A549 (cell line): ENCODE measurements at regions of chr19 and their contacts with region 1.

Region 1: DNA sequence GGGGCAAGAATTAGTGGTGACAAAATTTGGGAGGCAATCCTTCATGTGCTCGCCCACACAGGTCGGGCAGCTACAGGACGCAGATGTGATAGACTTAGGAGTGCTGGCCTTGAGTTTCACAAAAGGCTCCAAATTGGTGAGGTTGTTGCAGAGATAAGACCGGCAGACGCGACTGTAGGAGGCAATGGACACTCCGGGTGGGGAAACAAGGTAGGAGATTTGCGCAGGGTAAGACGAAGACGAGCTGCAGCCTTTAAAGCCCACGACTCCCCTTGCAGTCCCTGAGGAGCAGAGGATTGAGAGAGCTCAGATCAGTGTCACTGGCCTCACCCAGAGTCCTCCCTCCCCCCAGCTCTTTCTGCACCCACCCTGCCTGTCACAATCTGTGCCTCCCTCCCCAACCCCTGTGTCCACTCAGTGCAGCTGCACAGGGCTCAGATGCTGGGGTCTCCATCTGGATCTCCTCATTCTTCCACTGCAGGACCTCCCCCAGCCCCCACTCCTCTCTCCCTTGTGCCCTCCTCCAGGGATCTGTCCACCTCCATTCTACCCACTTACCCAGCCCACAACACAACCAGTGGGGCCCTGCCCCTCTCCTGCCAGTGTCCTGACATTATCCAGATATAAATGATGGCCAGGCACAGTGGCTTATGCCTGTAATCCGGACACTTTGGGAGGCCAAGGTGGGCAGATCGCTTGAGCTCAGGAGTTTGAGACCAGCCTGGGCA is 6.3 kb downstream of the LYPD4 start:
- DNase-seq: no peak
- ATAC-seq: peak; percentile 7 to 20; a peak in 4 of 6 replicates
- H3K4me3 ChIP-seq: no peak overlapping the region
- H3K27ac ChIP-seq: no peak overlapping the region
- H3K4me1 ChIP-seq: no peaks in the 10 kb centered on the region
- CTCF ChIP-seq: no peak
- EP300 ChIP-seq: no peak
- POLR2A ChIP-seq: no peak
- RAD21 ChIP-seq: no peak

Region 2: DNA sequence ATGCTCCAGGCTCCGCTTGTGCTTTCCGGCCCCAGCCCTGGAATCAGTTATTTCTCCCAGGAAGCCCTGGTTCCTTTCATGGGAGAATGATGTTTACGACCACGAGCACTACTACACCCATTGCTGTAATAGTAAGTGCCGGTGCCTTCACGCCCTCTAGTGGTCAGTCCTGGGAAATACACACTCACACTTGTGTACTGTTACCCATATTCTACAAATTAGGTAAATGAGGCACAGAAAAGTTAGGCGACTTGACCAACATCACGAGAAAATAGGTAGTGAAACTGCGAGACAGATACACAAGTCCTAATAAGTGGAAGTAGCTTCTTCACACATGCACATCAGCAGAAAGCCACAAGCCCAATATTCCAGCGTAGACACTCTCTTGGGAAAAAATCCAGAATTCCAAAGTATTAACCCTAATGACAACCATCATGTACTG is 240.5 kb before region 1 on chr19:
- CTCF ChIA-PET with region 1: no interaction called
- POLR2A ChIA-PET with region 1: no interaction called
- DNase-seq: peak; percentile 85 to 99
- ATAC-seq: peak; percentile 70 to 90; a peak in 5 of 6 replicates
- H3K4me3 ChIP-seq: no peak overlapping the region
- H3K27ac ChIP-seq: no peak overlapping the region
- H3K4me1 ChIP-seq: no peaks in the 10 kb centered on the region
- CTCF ChIP-seq: peak; percentile 99
- EP300 ChIP-seq: no peak
- POLR2A ChIP-seq: no peak
- RAD21 ChIP-seq: peak; percentile 44 to 54; a peak in 3 of 5 replicates

Region 3: DNA sequence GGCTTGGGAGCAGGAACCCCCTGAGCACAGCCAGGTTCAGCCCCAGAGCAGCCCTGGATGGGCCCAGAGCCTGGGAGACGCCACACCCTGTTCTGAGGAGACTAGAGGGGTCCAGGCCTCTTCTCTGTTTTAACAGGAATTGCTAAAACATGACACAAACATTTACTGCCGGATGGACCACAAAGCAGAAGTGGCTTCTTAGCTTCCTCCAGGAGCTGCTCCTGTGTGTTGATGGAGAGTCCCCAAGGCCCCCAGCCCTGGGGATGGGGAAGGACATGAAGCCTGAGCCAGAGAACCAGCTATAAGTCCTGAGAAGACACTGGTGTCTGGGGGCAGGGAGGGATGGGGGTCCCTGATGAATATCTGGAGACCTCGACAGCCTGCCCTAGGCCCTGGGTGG is 27.1 kb before region 1 on chr19:
- CTCF ChIA-PET with region 1: interaction called, 30 read pairs
- POLR2A ChIA-PET with region 1: no interaction called
- DNase-seq: no peak
- ATAC-seq: no peak
- H3K4me3 ChIP-seq: no peak overlapping the region
- H3K27ac ChIP-seq: no peak overlapping the region
- H3K4me1 ChIP-seq: no peaks in the 10 kb centered on the region
- CTCF ChIP-seq: no peak
- EP300 ChIP-seq: no peak
- POLR2A ChIP-seq: no peak
- RAD21 ChIP-seq: no peak

Region 4: DNA sequence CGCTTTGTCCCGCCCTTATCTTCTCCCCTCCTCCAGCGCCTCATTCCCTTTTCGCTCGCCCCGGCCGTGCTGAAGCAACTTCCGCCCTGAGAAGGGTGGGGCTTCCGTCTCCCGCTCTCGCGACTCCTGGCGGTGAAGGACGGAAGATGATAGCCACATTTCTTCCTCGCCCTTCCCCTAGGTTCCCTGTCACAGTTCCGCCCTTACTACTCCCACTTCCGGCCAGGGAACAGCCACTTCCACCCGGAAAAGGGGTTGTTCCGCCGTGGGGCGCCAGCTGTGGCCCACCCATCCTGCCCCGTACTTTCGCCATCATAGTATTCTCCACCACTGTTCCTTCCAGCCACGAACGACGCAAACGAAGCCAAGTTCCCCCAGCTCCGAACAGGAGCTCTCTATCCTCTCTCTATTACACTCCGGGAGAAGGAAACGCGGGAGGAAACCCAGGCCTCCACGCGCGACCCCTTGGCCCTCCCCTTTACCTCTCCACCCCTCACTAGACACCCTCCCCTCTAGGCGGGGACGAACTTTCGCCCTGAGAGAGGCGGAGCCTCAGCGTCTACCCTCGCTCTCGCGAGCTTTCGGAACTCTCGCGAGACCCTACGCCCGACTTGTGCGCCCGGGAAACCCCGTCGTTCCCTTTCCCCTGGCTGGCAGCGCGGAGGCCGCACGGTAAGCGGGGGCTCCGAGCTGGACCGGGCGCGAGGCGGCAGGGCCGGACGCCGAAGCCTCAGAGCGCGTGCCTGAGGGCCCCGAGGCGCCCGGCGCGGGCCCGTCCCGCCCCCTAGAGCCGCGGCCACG is 21.7 kb after region 1 on chr19 and contains the start of gene RPS19:
- CTCF ChIA-PET with region 1: interaction called, 243 read pairs
- POLR2A ChIA-PET with region 1: interaction called, 10 read pairs
- DNase-seq: peak; percentile 100
- ATAC-seq: peak; percentile 86 to 92
- H3K4me3 ChIP-seq: peak within 1 kb of the TSS; percentile 89
- H3K27ac ChIP-seq: peak within 1 kb of the TSS; percentile 90 to 95
- H3K4me1 ChIP-seq: peaks cover 40% of the 10 kb centered on the region
- CTCF ChIP-seq: peak; percentile 56
- EP300 ChIP-seq: peak in 1 of 2 experiments; percentile 13; a peak in 1 of 5 replicates
- POLR2A ChIP-seq: peak; percentile 95
- RAD21 ChIP-seq: no peak; a peak in 1 of 5 replicates
- polyA plus RNA-seq, gene RPS19: 2,749 and 3,564 TPM in 2 replicates